ENCODE measurements at regions of chr6 and their contacts with region 1.

Region 1: GRCh38 chr6:141552473-141552878 is 580.2 kb upstream of the GJE1 start:
- DNase-seq: peak; percentile 84
- ATAC-seq: peak; percentile 90
- H3K4me3 ChIP-seq: no peak overlapping the region
- H3K27ac ChIP-seq: peak overlapping the region; percentile 69; the same call in 1 of the 2 replicates
- H3K4me1 ChIP-seq: no peaks in the 10 kb centered on the region; the same call in 1 of the 2 replicates
- H3K27me3 ChIP-seq: no peaks in the 10 kb centered on the region
- CTCF ChIP-seq: 0 out of 2 replicates have a peak, but pooled peaks have one; percentile 2

Region 2: GRCh38 chr6:141056945-141057625 is 495.4 kb before region 1 on chr6:
- CTCF ChIA-PET with region 1: no interaction called
- POLR2A ChIA-PET with region 1: interaction called, 10 read pairs
- in situ Hi-C with region 1: no loop called
- intact Hi-C with region 1: no loop called
- DNase-seq: no peak
- ATAC-seq: no peak
- H3K4me3 ChIP-seq: no peak overlapping the region
- H3K27ac ChIP-seq: no peak overlapping the region
- H3K4me1 ChIP-seq: no peaks in the 10 kb centered on the region
- H3K27me3 ChIP-seq: no peaks in the 10 kb centered on the region
- CTCF ChIP-seq: no peak

Region 3: GRCh38 chr6:141403795-141404194 is 148.7 kb before region 1 on chr6:
- CTCF ChIA-PET with region 1: no interaction called
- POLR2A ChIA-PET with region 1: no interaction called
- in situ Hi-C with region 1: no loop called
- intact Hi-C with region 1: no loop called
- DNase-seq: no peak
- ATAC-seq: no peak
- H3K4me3 ChIP-seq: no peak overlapping the region
- H3K27ac ChIP-seq: no peak overlapping the region
- H3K4me1 ChIP-seq: no peaks in the 10 kb centered on the region
- H3K27me3 ChIP-seq: no peaks in the 10 kb centered on the region
- CTCF ChIP-seq: no peak

Region 4: GRCh38 chr6:141587482-141588266 is 35.2 kb after region 1 on chr6:
- CTCF ChIA-PET with region 1: no interaction called
- POLR2A ChIA-PET with region 1: no interaction called
- in situ Hi-C with region 1: no loop called
- intact Hi-C with region 1: no loop called
- DNase-seq: no peak
- ATAC-seq: no peak
- H3K4me3 ChIP-seq: no peak overlapping the region
- H3K27ac ChIP-seq: no peak overlapping the region
- H3K4me1 ChIP-seq: no peaks in the 10 kb centered on the region
- H3K27me3 ChIP-seq: no peaks in the 10 kb centered on the region
- CTCF ChIP-seq: no peak

Region 5: DNA sequence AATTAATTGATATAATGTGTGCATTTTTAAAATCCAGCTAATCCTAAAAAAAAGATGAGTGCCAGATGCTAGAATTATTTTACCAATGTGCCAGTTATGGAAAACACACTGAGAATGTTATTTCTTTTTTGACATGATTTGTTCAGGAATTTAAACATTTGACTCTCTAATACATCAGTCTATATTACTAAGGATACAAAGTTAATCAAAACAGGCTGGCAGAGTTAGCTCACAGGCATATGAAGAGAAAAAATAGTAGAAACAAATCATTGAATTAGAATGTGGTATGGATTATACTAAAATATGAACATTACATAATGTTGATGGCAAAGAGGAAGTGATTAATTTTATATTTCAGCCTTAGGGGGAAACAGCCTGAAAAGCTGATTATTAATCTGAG is 211.9 kb after region 1 on chr6:
- CTCF ChIA-PET with region 1: no interaction called
- POLR2A ChIA-PET with region 1: no interaction called
- in situ Hi-C with region 1: no loop called
- intact Hi-C with region 1: no loop called
- DNase-seq: no peak
- ATAC-seq: no peak
- H3K4me3 ChIP-seq: no peak overlapping the region
- H3K27ac ChIP-seq: no peak overlapping the region
- H3K4me1 ChIP-seq: no peaks in the 10 kb centered on the region
- H3K27me3 ChIP-seq: no peaks in the 10 kb centered on the region
- CTCF ChIP-seq: no peak

Measured in Panc1 (cell line).